ENCODE measurements at regions of chr22 and their contacts with region 1.

Region 1: DNA sequence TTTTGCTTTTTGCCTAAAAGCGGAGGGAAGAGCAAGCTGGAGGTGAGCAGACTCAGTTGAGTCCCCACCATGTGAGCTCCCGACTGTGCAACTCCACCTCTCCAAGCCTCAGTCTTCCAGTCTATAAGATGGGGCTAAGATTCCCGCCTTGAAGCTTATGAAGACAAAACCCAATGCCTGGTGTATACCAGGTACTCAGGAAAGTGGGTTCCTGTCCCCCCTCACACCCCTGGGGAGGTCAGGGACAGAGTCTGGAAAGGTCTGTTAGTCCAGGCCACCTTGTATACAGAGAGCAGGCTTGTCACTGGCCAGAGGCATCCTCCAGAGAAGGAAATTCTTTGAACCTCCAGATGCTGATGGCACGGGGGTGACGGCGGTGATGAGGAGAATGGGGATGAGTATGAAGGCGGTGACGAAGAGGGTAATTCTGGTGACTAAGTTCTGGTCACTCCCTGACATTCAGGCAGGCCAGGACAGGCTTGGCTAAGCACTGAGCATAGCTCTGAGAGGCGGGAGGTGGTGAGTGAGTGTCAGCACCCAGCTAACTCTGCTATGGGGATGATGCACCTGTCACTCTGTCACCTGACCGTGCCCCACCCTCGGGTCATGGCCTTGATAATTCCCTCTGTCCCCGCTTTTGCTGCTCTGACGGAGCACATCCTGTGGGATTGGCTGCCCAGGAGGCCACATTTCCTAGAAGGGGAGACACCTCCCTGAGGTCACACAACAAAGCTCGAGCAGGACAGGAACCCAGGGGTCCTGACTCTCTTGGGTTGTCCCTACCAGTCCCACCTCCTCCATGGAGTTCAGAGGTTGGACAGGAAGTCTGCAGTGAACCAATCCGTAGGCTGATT is 30.9 kb upstream of the CSNK1E start:
- H3K4me3 Mint-ChIP-seq: no peak overlapping the region
- H3K27ac Mint-ChIP-seq: no peak overlapping the region
- H3K4me1 Mint-ChIP-seq: peaks cover 17% of the 10 kb centered on the region
- H3K27me3 Mint-ChIP-seq: peaks cover 85% of the 10 kb centered on the region

Region 2: DNA sequence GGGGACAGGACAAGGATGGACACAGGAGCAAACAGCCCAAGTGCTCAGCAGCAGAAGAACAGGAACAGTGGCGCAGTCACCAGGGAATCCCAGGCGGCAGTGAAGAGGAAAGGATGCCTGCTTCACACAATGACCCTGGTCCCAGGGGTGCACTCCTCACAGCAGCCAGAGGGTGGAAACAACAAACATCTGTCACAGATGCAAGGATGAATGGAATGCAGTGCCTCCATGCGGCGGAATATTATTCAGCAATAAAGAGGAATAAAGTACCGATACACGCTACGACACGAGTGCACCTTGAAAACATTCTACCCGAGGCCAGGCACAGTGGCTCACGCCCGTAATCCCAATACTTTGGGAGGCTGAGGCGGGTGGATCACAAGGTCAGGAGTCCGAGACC is 43.6 kb before region 1 on chr22:
- intact Hi-C with region 1: loop called (anchors 5 kb)
- H3K4me3 Mint-ChIP-seq: no peak overlapping the region
- H3K27ac Mint-ChIP-seq: no peak overlapping the region
- H3K4me1 Mint-ChIP-seq: peaks cover 44% of the 10 kb centered on the region
- H3K27me3 Mint-ChIP-seq: peaks cover 4% of the 10 kb centered on the region

Measured in dendritic cell treated with granulocyte-macrophage colony-stimulating factor and Interleukin-4, amounts not matched to agents 40 ng/mL and 50 ng/mL, for 4 days (primary cell).